BJ (cell line): ENCODE measurements at regions of chr12 and their contacts with region 1.

Region 1: GRCh38 chr12:77925536-77926108 is 94.9 kb downstream of the NAV3 start:
- DNase-seq: peak; percentile 94
- H3K4me3 ChIP-seq: no peak overlapping the region
- H3K27me3 ChIP-seq: no peaks in the 10 kb centered on the region
- CTCF ChIP-seq: peak; percentile 98

Region 2: GRCh38 chr12:77152623-77153193 is 772.9 kb before region 1 on chr12:
- CTCF ChIA-PET with region 1: interaction called, 12 read pairs
- POLR2A ChIA-PET with region 1: no interaction called
- DNase-seq: no peak
- H3K4me3 ChIP-seq: no peak overlapping the region
- H3K27me3 ChIP-seq: no peaks in the 10 kb centered on the region
- CTCF ChIP-seq: peak; percentile 68

Region 3: DNA sequence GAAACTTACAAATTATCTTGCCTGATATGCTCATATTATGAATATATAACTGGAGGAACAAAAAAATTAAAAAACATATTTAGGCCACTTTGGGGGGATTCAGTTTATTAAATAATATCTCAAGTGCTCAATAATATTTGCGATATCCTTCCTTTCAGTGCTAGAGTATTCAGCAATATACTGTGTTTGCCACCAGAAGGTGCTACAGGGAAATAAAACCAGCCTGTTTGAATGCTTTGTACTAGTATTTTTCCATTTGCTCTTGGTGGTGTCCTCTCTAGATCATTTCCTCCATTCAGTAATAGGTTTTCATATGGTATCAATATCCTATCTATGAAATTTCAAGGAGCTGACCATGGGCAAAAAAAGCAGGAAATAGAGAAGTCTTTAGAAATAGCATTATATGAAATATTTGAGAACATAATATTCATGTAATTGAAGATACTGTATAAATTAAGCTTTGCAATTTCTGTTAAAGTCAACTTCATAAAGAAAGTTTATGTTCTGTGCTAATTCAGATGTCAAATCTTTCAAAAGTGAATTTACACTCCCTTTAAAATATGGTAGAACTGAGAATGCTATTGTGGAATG is 201.2 kb before region 1 on chr12:
- CTCF ChIA-PET with region 1: interaction called, 42 read pairs
- POLR2A ChIA-PET with region 1: interaction called, 4 read pairs
- DNase-seq: no peak
- H3K4me3 ChIP-seq: no peak overlapping the region
- H3K27me3 ChIP-seq: no peaks in the 10 kb centered on the region
- CTCF ChIP-seq: peak; percentile 63

Region 4: DNA sequence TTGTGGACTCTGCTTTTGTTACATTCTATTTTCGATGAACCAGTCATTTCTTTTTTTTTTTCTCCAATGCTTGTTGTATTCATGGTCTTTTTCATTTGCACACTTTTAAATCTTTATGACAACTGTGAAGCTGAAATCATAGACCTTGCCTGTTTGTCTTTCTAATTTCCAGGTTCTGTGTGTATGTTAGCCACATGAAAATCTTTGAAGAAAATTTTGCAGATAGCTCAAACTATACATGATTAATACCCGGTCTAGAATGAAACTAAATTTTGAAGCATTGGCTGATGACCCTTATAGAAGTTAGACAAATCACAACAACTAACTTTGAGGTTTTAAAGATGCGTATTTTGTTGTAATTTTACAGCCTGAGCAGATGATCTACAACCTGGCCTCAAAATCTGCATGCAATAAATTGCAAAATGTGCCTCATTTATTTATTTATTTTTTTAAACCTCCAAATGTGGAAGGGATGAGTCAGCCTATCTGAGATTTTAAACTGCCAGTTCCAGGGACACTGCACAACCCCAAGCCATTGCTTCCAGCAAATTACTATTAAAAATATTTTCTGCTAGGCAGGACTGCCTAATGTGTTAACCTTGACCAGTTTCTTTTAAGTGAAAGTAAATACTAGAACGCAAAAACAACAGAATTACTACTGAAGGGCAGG is 191.3 kb before region 1 on chr12:
- CTCF ChIA-PET with region 1: interaction called, 14 read pairs
- POLR2A ChIA-PET with region 1: no interaction called
- DNase-seq: peak; percentile 38
- H3K4me3 ChIP-seq: no peak overlapping the region
- H3K27me3 ChIP-seq: no peaks in the 10 kb centered on the region
- CTCF ChIP-seq: no peak

Region 5: GRCh38 chr12:77837876-77838291 is 87.7 kb before region 1 on chr12:
- CTCF ChIA-PET with region 1: no interaction called
- POLR2A ChIA-PET with region 1: no interaction called
- DNase-seq: no peak
- H3K4me3 ChIP-seq: no peak overlapping the region
- H3K27me3 ChIP-seq: no peaks in the 10 kb centered on the region
- CTCF ChIP-seq: no peak

Region 6: DNA sequence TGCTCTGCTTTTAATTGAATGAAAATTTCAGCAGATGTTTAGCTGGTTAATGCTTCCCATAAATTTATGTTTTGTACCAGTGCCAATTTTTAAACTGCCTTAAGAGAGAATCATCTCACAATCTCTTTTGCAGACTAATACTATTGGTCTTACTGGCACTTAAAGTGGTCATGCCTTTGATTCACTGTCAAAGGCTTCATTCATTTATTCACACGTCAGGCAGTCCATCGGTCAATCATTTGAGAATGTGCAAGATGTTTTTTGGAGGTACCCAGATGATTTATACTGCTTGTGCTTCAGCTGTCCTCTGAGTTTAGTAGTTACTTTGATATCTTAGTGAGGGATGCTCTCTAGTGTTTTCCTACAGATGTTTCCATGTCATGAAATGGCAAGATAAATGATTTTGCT is 11.5 kb before region 1 on chr12:
- CTCF ChIA-PET with region 1: interaction called, 26 read pairs
- POLR2A ChIA-PET with region 1: no interaction called
- DNase-seq: no peak
- H3K4me3 ChIP-seq: no peak overlapping the region
- H3K27me3 ChIP-seq: peaks cover 1% of the 10 kb centered on the region; the same call in 1 of the 2 replicates
- CTCF ChIP-seq: no peak

Region 7: GRCh38 chr12:77940011-77940423 is 14.4 kb after region 1 on chr12:
- CTCF ChIA-PET with region 1: interaction called, 21 read pairs
- POLR2A ChIA-PET with region 1: interaction called, 3 read pairs
- DNase-seq: peak; percentile 80
- H3K4me3 ChIP-seq: peak overlapping the region; percentile 53
- H3K27me3 ChIP-seq: no peaks in the 10 kb centered on the region
- CTCF ChIP-seq: no peak